Activated CD4-positive, alpha-beta T cell treated with anti-CD3 and anti-CD28 coated beads for 36 hours (primary cell): ENCODE measurements at regions of chr17 and their contacts with region 1.

Region 1: GRCh38 chr17:40219073-40219860 is at the start of gene WIPF2:
- DNase-seq: peak; percentile 98
- ATAC-seq: peak; percentile 96
- H3K4me3 Mint-ChIP-seq: peak within 1 kb of the TSS; percentile 89
- H3K27ac Mint-ChIP-seq: peak within 1 kb of the TSS; percentile 100
- H3K4me1 Mint-ChIP-seq: peaks cover 26% of the 10 kb centered on the region
- H3K27me3 Mint-ChIP-seq: no peaks in the 10 kb centered on the region
- total RNA-seq, gene WIPF2: 18.4 to 23.6 TPM

Region 2: DNA sequence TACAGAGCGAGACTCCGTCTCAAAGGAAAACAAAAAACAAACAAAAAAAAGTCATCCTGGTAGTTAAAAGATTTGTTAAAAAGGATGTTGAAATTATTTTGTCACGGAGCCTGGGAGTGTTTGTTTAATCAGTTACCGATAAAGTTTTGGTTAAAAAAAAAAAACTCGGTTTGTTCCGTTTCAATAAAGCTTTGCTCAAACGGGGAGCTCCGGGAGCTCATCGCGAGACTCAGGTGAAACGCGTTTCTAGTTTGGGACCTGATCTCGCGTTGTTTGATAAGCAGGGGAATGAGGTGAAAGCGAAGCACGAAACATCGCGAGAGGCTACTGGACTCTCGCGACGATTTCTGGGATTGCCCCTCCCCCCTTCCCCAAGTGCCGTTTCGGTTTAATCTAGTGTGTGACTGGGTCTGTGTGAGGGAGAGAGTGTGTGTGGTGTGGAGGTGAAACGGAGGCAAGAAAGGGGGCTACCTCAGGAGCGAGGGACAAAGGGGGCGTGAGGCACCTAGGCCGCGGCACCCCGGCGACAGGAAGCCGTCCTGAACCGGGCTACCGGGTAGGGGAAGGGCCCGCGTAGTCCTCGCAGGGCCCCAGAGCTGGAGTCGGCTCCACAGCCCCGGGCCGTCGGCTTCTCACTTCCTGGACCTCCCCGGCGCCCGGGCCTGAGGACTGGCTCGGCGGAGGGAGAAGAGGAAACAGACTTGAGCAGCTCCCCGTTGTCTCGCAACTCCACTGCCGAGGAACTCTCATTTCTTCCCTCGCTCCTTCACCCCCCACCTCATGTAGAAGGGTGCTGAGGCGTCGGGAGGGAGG is 757.9 kb before region 1 on chr17 and contains the start of gene CDK12:
- CTCF ChIA-PET with region 1: no interaction called
- POLR2A ChIA-PET with region 1: interaction called, 4 read pairs
- intact Hi-C with region 1: loop called in 1 of 2 experiments (anchors 1 kb)
- DNase-seq: peak; percentile 97
- ATAC-seq: peak; percentile 91
- H3K4me3 Mint-ChIP-seq: peak within 1 kb of the TSS; percentile 91
- H3K27ac Mint-ChIP-seq: peak within 1 kb of the TSS; percentile 94
- H3K4me1 Mint-ChIP-seq: peaks cover 22% of the 10 kb centered on the region
- H3K27me3 Mint-ChIP-seq: no peaks in the 10 kb centered on the region
- total RNA-seq, gene CDK12: 65.9 to 83.3 TPM

Region 3: DNA sequence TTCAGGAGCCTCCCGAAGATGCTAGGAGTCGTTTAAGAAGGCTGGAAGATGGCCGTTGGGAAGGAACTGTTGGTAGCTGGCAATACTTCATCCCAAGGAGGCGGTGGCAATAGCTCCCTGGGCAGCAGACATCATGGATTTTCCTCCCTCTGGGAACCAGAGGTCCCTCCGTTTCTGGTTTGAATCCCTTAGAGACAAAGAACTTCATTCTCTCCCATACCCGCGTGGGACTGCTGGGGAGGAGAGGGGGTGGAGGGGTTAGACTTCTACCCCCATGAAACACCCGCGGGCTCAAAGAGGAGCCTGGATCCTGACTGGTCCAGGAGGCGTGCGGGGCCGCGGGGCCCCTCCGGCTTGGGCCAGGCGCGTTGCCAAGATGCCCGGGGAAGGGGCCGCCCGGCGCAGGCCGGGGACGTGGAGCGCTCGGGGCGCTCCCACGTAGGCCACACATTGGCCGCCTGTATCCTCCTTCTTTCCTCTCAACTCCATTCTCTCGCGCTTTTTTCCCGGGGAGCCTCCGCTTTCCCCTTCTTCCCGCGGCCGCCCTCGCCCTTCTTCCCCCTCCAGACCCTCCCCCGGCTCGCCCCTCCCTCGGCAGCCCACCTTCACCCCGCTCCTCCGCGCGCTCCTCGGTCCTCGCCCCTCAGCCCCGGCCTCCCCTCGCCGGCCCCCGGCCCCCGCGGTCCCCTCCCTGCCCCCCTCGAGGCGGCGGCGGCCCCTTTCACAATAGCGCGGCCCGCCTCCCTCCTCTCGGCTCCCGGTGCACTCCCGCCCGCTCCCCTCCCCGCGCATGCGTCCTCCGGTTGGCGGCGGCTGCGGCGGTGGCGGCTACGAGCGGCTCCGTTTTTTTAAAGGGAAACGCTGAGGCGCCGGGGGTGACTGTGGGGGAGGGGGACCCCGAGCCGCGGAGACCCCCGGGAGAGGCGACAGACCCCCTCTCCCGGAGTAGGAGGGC is 97.8 kb before region 1 on chr17 and contains the start of gene MSL1:
- CTCF ChIA-PET with region 1: no interaction called
- POLR2A ChIA-PET with region 1: no interaction called
- intact Hi-C with region 1: loop called in 1 of 2 experiments (anchors 1 kb)
- DNase-seq: peak; percentile 92
- ATAC-seq: peak; percentile 69
- H3K4me3 Mint-ChIP-seq: peak within 1 kb of the TSS; percentile 79
- H3K27ac Mint-ChIP-seq: peak within 1 kb of the TSS; percentile 57
- H3K4me1 Mint-ChIP-seq: peaks cover 29% of the 10 kb centered on the region
- H3K27me3 Mint-ChIP-seq: no peaks in the 10 kb centered on the region
- total RNA-seq, gene MSL1: 81.7 to 89.6 TPM

Region 4: GRCh38 chr17:40177275-40177874 is 41.9 kb before region 1 on chr17 and contains the start of gene RAPGEFL1:
- CTCF ChIA-PET with region 1: no interaction called
- POLR2A ChIA-PET with region 1: no interaction called
- intact Hi-C with region 1: loop called in 1 of 2 experiments (anchors 1 kb)
- DNase-seq: peak; percentile 95
- ATAC-seq: peak; percentile 97
- H3K4me3 Mint-ChIP-seq: peak within 1 kb of the TSS; percentile 53
- H3K27ac Mint-ChIP-seq: no peak within 1 kb of the TSS
- H3K4me1 Mint-ChIP-seq: peaks cover 8% of the 10 kb centered on the region
- H3K27me3 Mint-ChIP-seq: no peaks in the 10 kb centered on the region
- total RNA-seq, gene RAPGEFL1: 5.1 to 6.2 TPM

Region 5: GRCh38 chr17:40340880-40341807 is 121.9 kb after region 1 on chr17:
- CTCF ChIA-PET with region 1: no interaction called
- POLR2A ChIA-PET with region 1: no interaction called
- intact Hi-C with region 1: loop called in 1 of 2 experiments (anchors 5 kb)
- DNase-seq: peak; percentile 93
- ATAC-seq: peak; percentile 87
- H3K4me3 Mint-ChIP-seq: peak overlapping the region; percentile 60
- H3K27ac Mint-ChIP-seq: peak overlapping the region; percentile 85
- H3K4me1 Mint-ChIP-seq: peaks cover 74% of the 10 kb centered on the region
- H3K27me3 Mint-ChIP-seq: no peaks in the 10 kb centered on the region

Region 6: DNA sequence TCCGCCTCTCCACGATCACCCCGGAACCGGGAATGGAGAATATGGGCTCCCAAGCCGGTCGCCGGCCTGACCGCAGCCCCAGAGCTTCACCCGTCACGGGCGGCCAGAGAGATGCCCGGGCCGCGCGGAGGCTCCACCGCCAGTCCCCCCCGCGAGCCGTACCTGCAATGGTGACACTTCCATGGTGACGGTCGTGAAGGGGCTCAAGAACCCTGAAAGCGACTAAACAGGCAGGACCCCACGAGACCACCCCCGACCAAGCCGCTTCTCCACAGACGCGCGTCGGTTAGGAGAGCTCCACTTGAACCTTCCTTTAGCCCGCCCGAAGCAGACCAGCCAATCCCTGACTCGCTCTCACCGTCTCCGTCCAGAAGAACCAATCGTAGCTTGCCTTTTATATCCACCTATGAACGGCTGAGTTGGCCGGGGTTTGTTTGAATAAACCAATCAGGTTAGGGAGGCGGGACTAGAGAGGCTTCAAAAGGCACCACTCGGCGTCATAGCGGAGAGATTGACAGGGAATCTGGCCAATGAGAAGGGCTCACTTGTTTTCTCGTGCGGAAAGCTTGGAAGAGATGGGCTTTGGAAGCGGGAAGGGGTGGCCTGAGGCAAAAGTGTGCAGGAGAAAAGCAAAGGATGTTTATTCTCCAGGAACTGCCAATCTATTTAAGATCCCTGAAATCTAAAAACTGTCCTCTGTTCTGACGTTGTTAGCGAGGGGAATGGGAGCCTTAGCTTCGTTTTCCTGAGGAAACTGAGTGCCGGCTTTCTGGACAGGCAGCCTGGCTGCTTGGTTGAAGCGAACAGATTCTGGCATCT is 198.6 kb after region 1 on chr17 and contains the start of gene TOP2A:
- CTCF ChIA-PET with region 1: interaction called, 3 read pairs
- POLR2A ChIA-PET with region 1: no interaction called
- intact Hi-C with region 1: loop called in 1 of 2 experiments (anchors 1 kb)
- DNase-seq: peak; percentile 95
- ATAC-seq: peak; percentile 99
- H3K4me3 Mint-ChIP-seq: peak within 1 kb of the TSS; percentile 86
- H3K27ac Mint-ChIP-seq: peak within 1 kb of the TSS; percentile 89
- H3K4me1 Mint-ChIP-seq: peaks cover 24% of the 10 kb centered on the region
- H3K27me3 Mint-ChIP-seq: no peaks in the 10 kb centered on the region
- total RNA-seq, gene TOP2A: 245 to 322 TPM